IMR-90 (cell line): ENCODE measurements at regions of chr5 and their contacts with region 1.

Region 1: DNA sequence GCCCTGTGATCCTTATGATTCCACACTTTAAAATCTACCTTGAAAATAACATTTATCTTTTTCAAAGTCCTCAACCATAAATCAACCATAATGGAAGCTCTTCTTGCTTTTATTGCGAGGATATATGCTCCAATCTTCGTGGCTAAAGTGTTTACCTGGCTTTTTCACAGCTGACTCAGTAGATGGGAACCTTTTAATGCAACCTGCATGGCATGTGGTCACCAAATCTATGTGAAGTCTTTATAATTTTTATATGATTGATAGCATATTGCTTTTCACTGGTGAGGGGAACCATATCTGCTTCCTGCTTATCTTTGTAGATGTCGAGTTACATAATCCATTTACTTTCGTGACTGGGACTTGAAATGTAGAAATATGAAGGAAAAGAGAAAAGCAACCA is 47.1 kb upstream of the TLX3 start:
- DNase-seq: no peak
- ATAC-seq: no peak
- H3K4me3 ChIP-seq: no peak overlapping the region
- H3K27ac ChIP-seq: no peak overlapping the region
- H3K4me1 ChIP-seq: no peaks in the 10 kb centered on the region
- H3K27me3 ChIP-seq: no peaks in the 10 kb centered on the region
- CTCF ChIP-seq: no peak
- POLR2A ChIP-seq: no peak
- RAD21 ChIP-seq: no peak

Region 2: DNA sequence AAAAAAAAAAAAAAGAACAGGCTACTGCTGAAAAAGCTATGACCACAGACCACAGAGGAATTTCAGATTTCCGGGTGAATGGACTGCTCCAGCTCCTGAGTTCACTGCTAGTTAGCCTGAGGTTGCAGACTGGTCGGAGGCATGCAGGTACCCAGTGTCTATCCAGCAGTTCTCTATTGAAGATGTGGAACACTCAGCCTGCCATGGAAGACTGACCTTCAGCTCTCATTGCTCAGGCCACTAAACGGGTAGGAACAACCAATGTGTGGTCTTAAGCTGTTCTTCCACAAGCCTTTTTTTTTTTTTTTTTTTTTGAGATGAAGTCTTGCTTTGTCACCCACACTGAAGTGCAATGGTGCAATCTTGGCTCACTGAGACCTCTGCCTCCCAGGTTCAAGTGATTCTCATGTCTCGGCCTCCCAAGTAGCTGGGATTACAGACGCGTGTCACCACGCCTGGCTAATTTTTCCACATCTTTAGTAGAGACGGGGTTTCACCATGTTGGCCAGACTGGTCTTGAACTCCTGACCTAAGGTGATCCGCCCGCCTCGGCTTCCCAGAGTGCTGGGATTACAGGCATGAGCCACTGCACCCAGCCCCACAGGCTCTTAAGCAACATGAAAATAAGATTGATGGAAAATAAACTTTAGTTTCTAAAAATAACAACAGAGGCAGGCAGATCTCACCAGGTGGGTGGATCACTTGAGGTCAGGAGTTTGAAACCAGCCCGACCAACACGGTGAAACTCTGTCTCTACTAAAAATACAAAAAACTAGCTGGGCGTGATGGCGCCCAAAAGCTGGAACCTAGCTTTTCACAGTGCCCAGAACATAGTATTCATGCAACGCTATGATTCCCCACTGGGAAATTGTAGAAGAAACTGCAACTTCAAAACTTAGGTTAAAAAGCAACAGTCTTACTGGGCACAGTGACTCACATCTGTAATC is 105.8 kb after region 1 on chr5:
- CTCF ChIA-PET with region 1: no interaction called
- POLR2A ChIA-PET with region 1: interaction called, 14 read pairs
- dilution Hi-C with region 1: no loop called
- in situ Hi-C with region 1: no loop called
- intact Hi-C with region 1: no loop called
- DNase-seq: peak; percentile 50
- ATAC-seq: peak; percentile 77
- H3K4me3 ChIP-seq: no peak overlapping the region
- H3K27ac ChIP-seq: no peak overlapping the region
- H3K4me1 ChIP-seq: no peaks in the 10 kb centered on the region
- H3K27me3 ChIP-seq: peaks cover 4% of the 10 kb centered on the region
- CTCF ChIP-seq: no peak
- POLR2A ChIP-seq: no peak
- RAD21 ChIP-seq: no peak

Region 3: DNA sequence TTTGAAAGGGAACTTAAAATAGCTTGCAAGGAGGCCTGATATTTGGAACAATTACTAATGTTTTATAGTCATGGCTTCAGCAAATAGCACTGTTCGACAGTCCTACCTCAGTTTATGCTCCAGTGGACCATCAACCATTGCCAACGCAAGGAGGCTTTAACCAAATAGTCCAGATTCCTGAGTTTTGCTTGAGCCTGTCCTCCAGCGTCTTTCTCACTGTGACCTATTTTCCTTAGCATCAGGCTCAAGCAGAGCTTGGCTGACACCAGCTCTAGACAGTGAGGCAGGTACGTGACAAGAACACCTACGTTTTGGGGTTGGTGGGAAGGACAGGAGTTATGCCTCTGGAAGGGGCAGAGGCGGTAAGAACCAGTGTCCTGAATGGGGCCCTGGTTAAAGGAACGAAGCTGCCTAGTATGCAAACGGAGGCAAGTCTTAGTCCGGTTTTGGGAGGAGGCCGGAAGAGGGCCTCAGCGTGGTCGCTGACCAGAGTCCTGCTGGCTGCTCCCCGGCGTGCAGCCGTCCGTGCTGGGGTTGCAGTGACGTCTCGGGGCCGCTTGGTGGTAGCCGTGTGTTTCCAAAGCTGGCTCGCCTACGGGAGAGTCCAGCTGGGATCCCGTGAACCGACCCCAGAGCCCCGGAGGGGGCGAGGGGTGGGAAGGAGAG is 156.5 kb after region 1 on chr5:
- CTCF ChIA-PET with region 1: no interaction called
- POLR2A ChIA-PET with region 1: no interaction called
- dilution Hi-C with region 1: no loop called
- in situ Hi-C with region 1: no loop called
- intact Hi-C with region 1: no loop called
- DNase-seq: peak; percentile 82
- ATAC-seq: peak; percentile 89
- H3K4me3 ChIP-seq: peak overlapping the region; percentile 3; the same call in 1 of the 2 replicates
- H3K27ac ChIP-seq: no peak overlapping the region
- H3K4me1 ChIP-seq: peaks cover 2% of the 10 kb centered on the region; the same call in 1 of the 2 replicates
- H3K27me3 ChIP-seq: no peaks in the 10 kb centered on the region; the same call in 1 of the 2 replicates
- CTCF ChIP-seq: peak; percentile 95
- POLR2A ChIP-seq: peak; percentile 39; the same call in 1 of the 2 replicates
- RAD21 ChIP-seq: peak; percentile 95